ENCODE measurements at regions of chr12 and their contacts with region 1.

Region 1: DNA sequence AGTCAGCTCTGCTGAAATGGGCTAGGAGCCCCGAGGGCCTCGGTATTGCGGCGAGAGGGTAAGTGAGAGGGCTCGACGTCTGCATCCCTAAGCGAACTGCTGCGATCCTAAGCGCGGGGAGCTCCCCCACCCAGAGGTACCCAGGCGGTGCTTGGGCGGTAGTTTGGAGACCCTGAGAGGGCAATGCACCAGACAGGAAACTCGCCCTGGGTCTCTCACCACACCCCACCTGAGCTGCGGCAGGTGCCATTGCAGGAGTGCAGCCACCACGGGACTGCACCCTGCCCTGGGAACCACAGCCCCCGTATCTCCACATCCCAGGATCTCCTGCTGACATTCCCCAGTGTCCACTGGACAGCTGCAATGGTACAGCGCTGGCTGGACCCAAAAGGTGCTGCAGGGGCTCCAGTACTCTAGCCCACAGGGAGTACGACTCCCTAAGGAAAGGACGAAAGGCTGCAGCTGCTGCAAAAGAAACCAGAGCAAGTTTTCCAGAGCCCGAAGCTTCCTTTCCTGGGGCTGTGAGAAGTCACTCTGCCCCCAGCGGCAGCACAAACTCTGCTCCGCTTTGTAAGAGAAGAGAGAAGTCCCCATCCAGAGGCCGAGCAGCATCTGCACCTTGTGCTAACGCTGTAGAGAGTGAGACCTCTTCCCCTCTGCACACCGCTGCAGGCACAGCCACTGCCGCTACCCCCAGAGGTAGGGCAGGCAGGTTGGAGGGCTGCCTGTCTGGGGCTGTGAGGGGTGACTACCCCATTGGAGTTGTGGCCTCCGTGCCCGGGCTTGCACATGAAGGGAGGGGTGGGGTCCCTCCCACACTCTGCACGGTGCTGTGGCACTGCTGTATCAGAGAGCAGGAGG is 31.1 kb upstream of the MON2 start:
- DNase-seq: peak in 4 of 5 donors; percentile 17 to 22 (median 20)
- H3K4me3 ChIP-seq: peak overlapping the region; percentile 64 to 78
- H3K4me3 Mint-ChIP-seq: peak overlapping the region; percentile 79 to 90 (median 86)
- H3K27ac ChIP-seq: no peak overlapping the region
- H3K27ac Mint-ChIP-seq: peak overlapping the region in 3 of 7 donors; percentile 2 to 33 (median 29)
- H3K4me1 ChIP-seq: peaks cover 21% of the 10 kb centered on the region
- H3K4me1 Mint-ChIP-seq: peaks cover 8 to 21% (median 16%) of the 10 kb centered on the region in 4 donors
- H3K27me3 ChIP-seq: peaks cover 11% of the 10 kb centered on the region
- H3K27me3 Mint-ChIP-seq: peaks cover 5 to 6% of the 10 kb centered on the region in 2 donors

Region 2: DNA sequence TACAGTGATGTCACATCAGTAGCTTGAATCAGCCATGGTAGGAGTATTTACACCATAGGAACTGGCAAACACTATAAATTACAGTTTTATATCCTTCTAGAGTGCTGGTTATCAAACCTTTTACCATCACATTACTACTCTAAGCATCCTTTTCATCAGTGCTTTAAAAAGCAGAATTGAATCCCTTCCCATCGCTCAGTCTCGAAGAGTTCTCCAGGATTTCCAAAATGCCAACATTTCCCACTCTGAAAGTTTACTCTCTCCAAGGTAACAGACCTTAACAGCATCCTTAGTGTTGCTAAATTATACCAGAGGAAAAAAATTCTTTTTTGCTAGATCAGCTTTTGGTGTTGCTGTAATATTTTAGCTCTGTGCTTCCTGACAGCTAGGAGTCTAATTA is 384.7 kb before region 1 on chr12:
- CTCF ChIA-PET with region 1: no interaction called
- POLR2A ChIA-PET with region 1: no interaction called
- intact Hi-C with region 1: no loop called
- DNase-seq: no peak
- H3K4me3 ChIP-seq: no peak overlapping the region
- H3K4me3 Mint-ChIP-seq: no peak overlapping the region
- H3K27ac ChIP-seq: no peak overlapping the region
- H3K27ac Mint-ChIP-seq: no peak overlapping the region
- H3K4me1 ChIP-seq: no peaks in the 10 kb centered on the region
- H3K4me1 Mint-ChIP-seq: no peaks in the 10 kb centered on the region
- H3K27me3 ChIP-seq: no peaks in the 10 kb centered on the region
- H3K27me3 Mint-ChIP-seq: no peaks in the 10 kb centered on the region

Region 3: DNA sequence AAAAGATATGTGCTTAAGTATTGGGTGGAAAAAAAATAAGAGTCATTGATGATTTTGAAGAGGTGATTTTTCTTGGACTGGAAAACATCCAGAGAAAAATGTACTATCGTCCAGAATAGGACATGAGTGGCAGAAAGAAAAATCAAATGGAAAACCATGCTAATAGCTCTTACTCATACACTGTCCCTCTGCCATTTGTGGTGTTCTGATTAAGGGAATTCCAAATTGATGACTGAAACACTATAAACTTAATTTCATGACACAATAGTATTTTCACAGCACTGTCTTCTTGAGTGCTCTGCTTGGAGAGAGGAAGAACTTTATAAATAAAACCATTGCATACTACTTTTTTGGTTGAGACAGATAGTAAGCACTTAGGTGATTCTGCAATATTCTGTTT is 102.9 kb before region 1 on chr12:
- CTCF ChIA-PET with region 1: no interaction called
- POLR2A ChIA-PET with region 1: no interaction called
- intact Hi-C with region 1: no loop called
- DNase-seq: no peak
- H3K4me3 ChIP-seq: no peak overlapping the region
- H3K4me3 Mint-ChIP-seq: no peak overlapping the region
- H3K27ac ChIP-seq: no peak overlapping the region
- H3K27ac Mint-ChIP-seq: peak overlapping the region in 1 of 7 donors; percentile 38
- H3K4me1 ChIP-seq: peaks cover 10% of the 10 kb centered on the region
- H3K4me1 Mint-ChIP-seq: peaks cover 14 to 40% (median 26%) of the 10 kb centered on the region in 4 donors
- H3K27me3 ChIP-seq: no peaks in the 10 kb centered on the region
- H3K27me3 Mint-ChIP-seq: no peaks in the 10 kb centered on the region

Region 4: GRCh38 chr12:62446754-62447452 is 11.4 kb after region 1 on chr12:
- CTCF ChIA-PET with region 1: interaction called, 18 read pairs
- POLR2A ChIA-PET with region 1: no interaction called
- intact Hi-C with region 1: no loop called
- DNase-seq: no peak
- H3K4me3 ChIP-seq: no peak overlapping the region
- H3K4me3 Mint-ChIP-seq: no peak overlapping the region
- H3K27ac ChIP-seq: no peak overlapping the region
- H3K27ac Mint-ChIP-seq: no peak overlapping the region
- H3K4me1 ChIP-seq: no peaks in the 10 kb centered on the region
- H3K4me1 Mint-ChIP-seq: no peaks in the 10 kb centered on the region
- H3K27me3 ChIP-seq: no peaks in the 10 kb centered on the region
- H3K27me3 Mint-ChIP-seq: peaks cover 2 to 6% of the 10 kb centered on the region in 2 donors

Region 5: DNA sequence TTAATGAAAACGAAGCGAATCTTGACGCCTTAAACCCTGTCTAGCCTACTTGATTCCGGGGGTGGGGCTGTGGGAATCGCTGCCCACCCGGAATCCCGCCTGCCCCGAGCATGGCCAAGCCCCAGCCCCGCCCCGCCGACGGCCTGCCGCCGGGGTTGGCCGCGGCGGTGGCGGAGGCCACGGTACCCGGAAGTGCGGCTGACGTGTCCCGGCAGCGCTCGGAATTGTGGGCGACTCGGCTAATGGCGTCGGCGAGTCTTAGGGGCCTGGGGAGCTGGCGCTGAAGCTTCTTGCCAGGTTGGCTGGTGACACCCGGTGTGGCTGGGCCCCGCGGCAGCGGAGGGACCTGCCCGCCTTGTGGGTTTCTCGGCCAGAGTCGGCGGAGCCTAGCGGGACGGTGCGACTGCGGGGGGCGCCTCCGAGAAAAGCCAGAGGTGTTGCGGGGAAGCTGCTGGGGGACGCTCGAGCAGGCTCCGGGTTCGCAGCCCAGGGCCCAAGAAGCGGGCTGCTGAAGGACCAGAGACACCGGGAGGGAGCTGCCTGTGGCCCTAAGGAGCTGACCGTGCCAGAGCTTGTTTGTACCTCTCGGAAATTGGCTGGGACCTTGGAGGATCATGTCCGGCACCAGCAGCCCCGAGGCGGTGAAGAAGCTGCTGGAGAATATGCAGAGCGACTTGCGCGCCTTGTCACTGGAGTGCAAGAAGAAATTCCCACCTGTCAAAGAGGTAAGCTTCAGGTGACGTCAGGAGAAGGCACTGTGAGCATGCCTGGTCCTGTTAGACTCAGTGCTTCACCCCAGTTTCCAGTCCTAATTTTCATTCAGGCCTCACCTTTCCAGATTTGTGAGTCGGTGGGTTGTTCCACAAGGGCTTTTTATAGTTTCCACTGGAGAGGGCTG is 31.3 kb after region 1 on chr12 and contains the start of gene MON2:
- CTCF ChIA-PET with region 1: interaction called, 38 read pairs
- POLR2A ChIA-PET with region 1: interaction called, 4 read pairs
- intact Hi-C with region 1: loop called (anchors 1 kb)
- DNase-seq: peak; percentile 86 to 88 (median 87)
- H3K4me3 ChIP-seq: peak within 1 kb of the TSS; percentile 72 to 83
- H3K4me3 Mint-ChIP-seq: peak within 1 kb of the TSS; percentile 83 to 97 (median 94)
- H3K27ac ChIP-seq: peak within 1 kb of the TSS; percentile 91
- H3K27ac Mint-ChIP-seq: peak within 1 kb of the TSS; percentile 85 to 99 (median 97)
- H3K4me1 ChIP-seq: peaks cover 42% of the 10 kb centered on the region
- H3K4me1 Mint-ChIP-seq: peaks cover 19 to 31% (median 23%) of the 10 kb centered on the region in 4 donors
- H3K27me3 ChIP-seq: no peaks in the 10 kb centered on the region
- H3K27me3 Mint-ChIP-seq: peaks cover 0 to 3% of the 10 kb centered on the region in 2 donors
- total RNA-seq, gene MON2: 82.0 to 88.5 TPM

Region 6: DNA sequence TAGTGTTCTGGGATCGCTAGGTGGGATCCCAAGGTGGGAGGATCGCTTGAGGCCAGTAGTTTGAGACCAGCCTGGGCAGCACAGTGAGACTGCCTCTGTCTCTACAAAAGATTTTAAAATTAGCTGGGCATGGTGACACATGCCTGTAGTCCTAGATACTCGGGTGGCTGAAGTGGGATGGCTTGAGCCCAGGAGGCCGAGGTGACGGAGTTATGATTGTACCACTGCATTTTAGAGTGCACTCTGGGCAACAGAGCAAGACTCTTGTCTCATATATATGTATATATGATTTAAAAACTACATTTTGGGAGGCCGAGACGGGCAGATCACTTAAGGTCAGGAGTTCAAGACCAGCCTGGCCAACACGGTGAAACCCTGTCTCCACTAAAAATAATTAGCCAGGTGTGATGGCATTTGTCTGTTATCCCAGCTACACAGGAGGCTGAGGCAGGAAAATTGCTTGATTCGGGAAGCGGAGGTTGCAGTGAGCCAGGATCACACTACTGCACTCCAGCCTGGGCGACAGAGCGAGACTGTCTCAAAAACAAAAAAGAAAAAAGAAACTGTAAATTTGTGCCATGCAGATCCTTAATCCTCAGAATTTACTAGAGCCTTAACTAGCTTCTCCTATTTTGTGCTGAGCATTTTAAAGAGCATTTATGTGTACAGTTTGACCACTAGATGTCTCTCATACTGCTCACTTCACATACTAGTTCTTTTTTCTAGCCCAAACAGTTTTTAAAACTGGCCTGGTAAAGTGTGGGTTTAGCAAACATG is 145.9 kb after region 1 on chr12:
- CTCF ChIA-PET with region 1: interaction called, 6 read pairs
- POLR2A ChIA-PET with region 1: no interaction called
- intact Hi-C with region 1: loop called (anchors 1 kb)
- DNase-seq: peak in 4 of 5 donors; percentile 34 to 49 (median 38)
- H3K4me3 ChIP-seq: no peak overlapping the region
- H3K4me3 Mint-ChIP-seq: no peak overlapping the region
- H3K27ac ChIP-seq: no peak overlapping the region
- H3K27ac Mint-ChIP-seq: no peak overlapping the region
- H3K4me1 ChIP-seq: no peaks in the 10 kb centered on the region
- H3K4me1 Mint-ChIP-seq: peaks cover 0 to 2% (median 0%) of the 10 kb centered on the region in 4 donors
- H3K27me3 ChIP-seq: no peaks in the 10 kb centered on the region
- H3K27me3 Mint-ChIP-seq: no peaks in the 10 kb centered on the region

Region 7: DNA sequence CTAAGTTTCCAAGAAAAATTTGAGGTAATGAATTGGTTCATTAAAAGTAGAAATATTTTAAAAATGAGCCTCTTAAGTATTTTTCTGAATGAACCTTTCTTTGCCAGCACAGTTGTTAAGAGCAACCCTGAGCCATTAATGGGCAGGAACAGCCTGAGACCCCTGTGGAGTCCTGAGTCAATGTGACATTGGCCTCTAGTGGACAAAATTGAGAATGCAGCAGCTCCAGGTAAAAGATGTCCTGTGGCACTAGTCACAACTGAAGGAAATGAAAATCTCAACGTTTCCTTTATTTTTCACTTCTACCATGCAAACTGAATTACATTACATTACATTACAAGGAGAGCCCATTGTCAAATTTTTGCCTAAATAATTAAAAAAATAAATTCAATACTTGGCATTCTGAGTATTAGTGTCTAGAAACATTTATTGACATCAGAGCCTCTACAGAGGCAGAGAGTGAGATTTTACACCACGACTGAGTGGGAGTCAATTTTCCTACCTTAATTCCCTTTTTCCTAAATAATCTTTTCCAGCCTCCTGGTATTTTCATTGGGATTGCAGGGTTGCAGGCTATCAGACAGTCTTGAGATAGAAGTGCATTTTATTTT is 363.7 kb after region 1 on chr12:
- CTCF ChIA-PET with region 1: interaction called, 162 read pairs
- POLR2A ChIA-PET with region 1: interaction called, 3 read pairs
- intact Hi-C with region 1: loop called (anchors 1 kb)
- DNase-seq: peak; percentile 32 to 52 (median 44)
- H3K4me3 ChIP-seq: no peak overlapping the region
- H3K4me3 Mint-ChIP-seq: no peak overlapping the region
- H3K27ac ChIP-seq: no peak overlapping the region
- H3K27ac Mint-ChIP-seq: no peak overlapping the region
- H3K4me1 ChIP-seq: no peaks in the 10 kb centered on the region
- H3K4me1 Mint-ChIP-seq: peaks cover 0 to 1% (median 0%) of the 10 kb centered on the region in 4 donors
- H3K27me3 ChIP-seq: no peaks in the 10 kb centered on the region
- H3K27me3 Mint-ChIP-seq: peaks cover 4 to 5% of the 10 kb centered on the region in 2 donors